ENCODE measurements at regions of chr15 and their contacts with region 1.

Region 1: GRCh38 chr15:59516655-59517461 is 78.9 kb downstream of the FAM81A start:
- DNase-seq: peak; percentile 61
- CTCF ChIP-seq: no peak

Region 2: GRCh38 chr15:58957101-58957973 is 559.5 kb before region 1 on chr15:
- CTCF ChIA-PET with region 1: interaction called, 12 read pairs
- POLR2A ChIA-PET with region 1: no interaction called
- DNase-seq: peak; percentile 59
- CTCF ChIP-seq: peak; percentile 35

Region 3: GRCh38 chr15:59492389-59493377 is 24.2 kb before region 1 on chr15:
- CTCF ChIA-PET with region 1: interaction called, 11 read pairs
- POLR2A ChIA-PET with region 1: no interaction called
- DNase-seq: peak; percentile 56
- CTCF ChIP-seq: peak; percentile 87

Region 4: GRCh38 chr15:59501597-59501996 is 15.3 kb before region 1 on chr15:
- CTCF ChIA-PET with region 1: interaction called, 44 read pairs
- POLR2A ChIA-PET with region 1: no interaction called
- DNase-seq: peak; percentile 72
- CTCF ChIP-seq: peak; percentile 61

Region 5: DNA sequence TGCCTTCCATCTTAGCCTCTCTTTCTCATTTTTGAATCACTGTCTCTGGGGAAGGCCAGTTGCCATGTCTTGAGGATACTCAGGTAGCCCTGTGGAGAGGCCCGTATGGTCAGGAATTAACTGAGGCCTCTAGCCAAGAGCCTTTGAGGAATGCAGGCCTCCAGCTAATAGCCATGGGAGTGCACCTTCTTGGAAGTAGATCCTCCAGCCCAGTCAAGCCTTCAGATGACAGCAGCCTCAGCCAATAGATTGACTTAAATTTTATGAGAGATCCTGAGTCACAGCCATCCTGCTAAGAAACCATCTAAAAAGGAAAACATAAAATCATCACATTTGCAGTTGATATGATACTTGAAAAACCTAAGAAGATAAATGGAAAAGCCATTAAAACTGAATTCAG is 284.8 kb after region 1 on chr15:
- CTCF ChIA-PET with region 1: no interaction called
- POLR2A ChIA-PET with region 1: no interaction called
- DNase-seq: no peak
- CTCF ChIP-seq: no peak

Measured in GM10248 (cell line).